Left ventricle myocardium inferior (tissue), 1 donor: ENCODE measurements at regions of chr3 and their contacts with region 1.

Region 1: DNA sequence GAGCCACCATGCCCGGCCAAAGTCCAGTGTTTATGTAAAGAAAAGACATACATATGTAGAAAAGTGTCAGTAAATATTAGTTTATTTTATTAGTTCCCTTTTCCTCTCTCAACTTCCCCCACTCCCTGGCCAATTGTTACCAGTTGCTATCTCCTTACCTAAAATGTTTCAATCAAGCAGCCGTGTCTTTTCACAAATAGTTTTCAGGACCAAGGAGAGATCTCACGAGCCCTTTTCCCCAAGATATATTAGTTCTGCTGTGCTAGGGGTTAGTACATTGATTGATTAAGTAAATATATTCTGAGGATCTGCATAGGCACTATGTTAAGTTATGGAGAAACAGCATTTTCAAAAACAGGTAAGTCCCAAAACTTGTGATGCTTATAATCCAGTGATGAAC is 87.4 kb downstream of the ZIC4 start:
- DNase-seq: no peak
- H3K4me3 ChIP-seq: no peak overlapping the region
- H3K27ac ChIP-seq: no peak overlapping the region
- H3K4me1 ChIP-seq: no peaks in the 10 kb centered on the region
- H3K27me3 ChIP-seq: peaks cover 21% of the 10 kb centered on the region
- CTCF ChIP-seq: no peak

Region 2: DNA sequence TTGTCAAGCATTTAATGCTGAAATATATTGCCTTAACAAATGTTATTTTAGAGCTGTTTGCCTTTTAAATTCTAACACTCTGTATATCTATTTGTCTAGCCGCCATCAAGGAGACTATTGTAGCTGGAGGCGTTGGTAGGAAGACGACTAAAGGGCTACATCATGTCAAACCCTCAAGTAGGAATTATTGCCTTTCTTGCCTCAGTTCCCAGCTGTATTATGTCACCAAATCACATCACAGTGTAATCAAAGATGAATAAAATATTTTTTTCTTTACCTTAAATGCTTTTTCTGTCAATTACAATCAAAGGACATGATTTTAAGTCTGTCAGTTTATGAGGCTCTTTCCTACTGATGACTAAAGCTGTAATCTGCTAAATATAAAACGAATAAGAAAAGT is 145.6 kb before region 1 on chr3:
- intact Hi-C with region 1: no loop called
- DNase-seq: no peak
- H3K4me3 ChIP-seq: no peak overlapping the region
- H3K27ac ChIP-seq: no peak overlapping the region
- H3K4me1 ChIP-seq: no peaks in the 10 kb centered on the region
- H3K27me3 ChIP-seq: no peaks in the 10 kb centered on the region
- CTCF ChIP-seq: no peak

Region 3: DNA sequence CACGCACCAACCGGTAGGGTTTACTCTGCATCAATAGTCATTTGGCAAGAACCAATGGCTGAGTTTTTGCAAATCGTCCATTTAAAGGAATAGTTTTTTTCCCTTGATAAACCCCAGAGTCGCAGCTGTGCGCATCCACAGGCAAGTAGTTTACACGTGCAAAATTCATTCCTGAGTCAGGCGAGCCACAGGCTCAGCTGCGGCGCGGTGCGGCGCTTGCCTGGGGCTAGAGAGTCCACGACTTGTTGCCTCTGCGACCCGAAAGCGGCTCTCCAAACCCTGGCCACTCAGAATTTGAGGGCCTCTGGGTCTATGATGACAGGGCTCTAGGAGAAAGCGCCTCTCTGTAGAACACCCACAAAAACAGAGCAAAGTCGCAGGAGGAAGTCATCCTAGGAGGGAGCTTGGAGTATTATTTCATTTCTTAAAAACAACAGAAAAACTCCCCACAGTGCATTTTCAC is 50.8 kb after region 1 on chr3:
- intact Hi-C with region 1: no loop called
- DNase-seq: no peak
- H3K4me3 ChIP-seq: no peak overlapping the region
- H3K27ac ChIP-seq: no peak overlapping the region
- H3K4me1 ChIP-seq: peaks cover 9% of the 10 kb centered on the region
- H3K27me3 ChIP-seq: peaks cover 100% of the 10 kb centered on the region
- CTCF ChIP-seq: no peak

Region 4: GRCh38 chr3:147383617-147384016 is 64.7 kb after region 1 on chr3:
- intact Hi-C with region 1: no loop called
- DNase-seq: no peak
- H3K4me3 ChIP-seq: no peak overlapping the region
- H3K27ac ChIP-seq: no peak overlapping the region
- H3K4me1 ChIP-seq: no peaks in the 10 kb centered on the region
- H3K27me3 ChIP-seq: peaks cover 100% of the 10 kb centered on the region
- CTCF ChIP-seq: no peak

Region 5: GRCh38 chr3:148598619-148599018 is 1279.7 kb after region 1 on chr3:
- intact Hi-C with region 1: loop called (anchors 10 kb)
- DNase-seq: no peak
- H3K4me3 ChIP-seq: no peak overlapping the region
- H3K27ac ChIP-seq: no peak overlapping the region
- H3K4me1 ChIP-seq: no peaks in the 10 kb centered on the region
- H3K27me3 ChIP-seq: no peaks in the 10 kb centered on the region
- CTCF ChIP-seq: no peak